Tibial artery (tissue), 4 donors: ENCODE measurements at regions of chr17 and their contacts with region 1.

Region 1: GRCh38 chr17:47270946-47271705 is 17.5 kb downstream of the ITGB3 start:
- DNase-seq: no peak
- H3K4me3 ChIP-seq: no peak overlapping the region
- H3K27ac ChIP-seq: peak overlapping the region; percentile 70 to 92
- H3K4me1 ChIP-seq: peaks cover 0 to 87% (median 61%) of the 10 kb centered on the region in 4 donors
- H3K27me3 ChIP-seq: no peaks in the 10 kb centered on the region
- CTCF ChIP-seq: no peak

Region 2: DNA sequence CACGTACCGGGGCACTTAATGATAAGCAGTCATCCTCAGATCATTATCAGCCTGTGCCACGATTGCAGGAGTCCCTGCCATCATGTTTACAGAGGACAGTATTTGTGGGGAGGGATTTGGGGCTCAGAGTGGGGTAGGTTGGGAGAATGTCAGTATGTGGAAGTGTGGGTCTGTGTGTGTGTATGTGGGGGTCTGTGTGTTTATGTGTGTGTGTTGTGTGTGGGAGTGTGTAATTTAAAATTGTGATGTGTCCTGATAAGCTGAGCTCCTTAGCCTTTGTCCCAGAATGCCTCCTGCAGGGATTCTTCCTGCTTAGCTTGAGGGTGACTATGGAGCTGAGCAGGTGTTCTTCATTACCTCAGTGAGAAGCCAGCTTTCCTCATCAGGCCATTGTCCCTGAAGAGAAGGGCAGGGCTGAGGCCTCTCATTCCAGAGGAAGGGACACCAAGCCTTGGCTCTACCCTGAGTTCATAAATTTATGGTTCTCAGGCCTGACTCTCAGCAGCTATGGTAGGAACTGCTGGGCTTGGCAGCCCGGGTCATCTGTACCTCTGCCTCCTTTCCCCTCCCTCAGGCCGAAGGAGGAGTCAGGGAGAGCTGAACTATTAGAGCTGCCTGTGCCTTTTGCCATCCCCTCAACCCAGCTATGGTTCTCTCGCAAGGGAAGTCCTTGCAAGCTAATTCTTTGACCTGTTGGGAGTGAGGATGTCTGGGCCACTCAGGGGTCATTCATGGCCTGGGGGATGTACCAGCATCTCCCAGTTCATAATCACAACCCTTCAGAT is 39.3 kb after region 1 on chr17:
- intact Hi-C with region 1: loop called (anchors 5 kb)
- DNase-seq: no peak
- H3K4me3 ChIP-seq: no peak overlapping the region
- H3K27ac ChIP-seq: peak overlapping the region; percentile 23 to 81
- H3K4me1 ChIP-seq: peaks cover 0 to 36% (median 16%) of the 10 kb centered on the region in 4 donors
- H3K27me3 ChIP-seq: no peaks in the 10 kb centered on the region
- CTCF ChIP-seq: no peak

Region 3: GRCh38 chr17:47335101-47335936 is 64.2 kb after region 1 on chr17:
- intact Hi-C with region 1: no loop called
- DNase-seq: no peak
- H3K4me3 ChIP-seq: no peak overlapping the region
- H3K27ac ChIP-seq: no peak overlapping the region
- H3K4me1 ChIP-seq: no peaks in the 10 kb centered on the region
- H3K27me3 ChIP-seq: no peaks in the 10 kb centered on the region
- CTCF ChIP-seq: no peak